BJ (cell line): ENCODE measurements at regions of chr13 and their contacts with region 1.

Region 1: GRCh38 chr13:79679334-79679733 is 198.4 kb downstream of the NDFIP2 start:
- DNase-seq: no peak
- H3K4me3 ChIP-seq: no peak overlapping the region
- H3K27me3 ChIP-seq: no peaks in the 10 kb centered on the region
- CTCF ChIP-seq: peak; percentile 79

Region 2: GRCh38 chr13:79445968-79446645 is 233.2 kb before region 1 on chr13:
- CTCF ChIA-PET with region 1: no interaction called
- POLR2A ChIA-PET with region 1: no interaction called
- DNase-seq: no peak
- H3K4me3 ChIP-seq: no peak overlapping the region
- H3K27me3 ChIP-seq: no peaks in the 10 kb centered on the region
- CTCF ChIP-seq: no peak

Region 3: GRCh38 chr13:79480954-79481684 is 198.2 kb before region 1 on chr13 and contains the start of gene NDFIP2:
- CTCF ChIA-PET with region 1: no interaction called
- POLR2A ChIA-PET with region 1: no interaction called
- DNase-seq: no peak
- H3K4me3 ChIP-seq: peak within 1 kb of the TSS; percentile 94
- H3K27me3 ChIP-seq: peaks cover 7% of the 10 kb centered on the region; the same call in 1 of the 2 replicates
- CTCF ChIP-seq: 0 out of 2 replicates have a peak, but pooled peaks have one; percentile 3
- polyA plus RNA-seq, gene NDFIP2: 53.8 and 71.5 TPM in 2 replicates

Region 4: DNA sequence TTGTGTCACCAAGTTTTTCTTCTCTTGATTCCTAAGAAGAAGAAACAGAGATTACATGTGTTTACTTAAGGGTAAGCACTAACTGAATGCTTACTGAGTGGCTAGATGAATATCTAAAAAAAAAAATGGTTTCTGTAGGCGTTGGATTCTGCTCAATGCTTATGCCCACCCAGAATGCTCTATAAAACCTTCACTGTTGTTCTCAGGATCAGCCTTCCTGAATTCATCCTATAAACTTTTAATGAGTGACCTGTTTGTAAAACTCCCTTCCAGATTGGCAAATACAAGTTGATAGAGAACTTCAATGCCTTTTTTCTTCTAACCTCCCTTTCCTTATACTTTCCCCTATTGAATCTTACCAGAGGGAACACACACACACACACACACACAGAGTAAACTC is 108.2 kb before region 1 on chr13:
- CTCF ChIA-PET with region 1: no interaction called
- POLR2A ChIA-PET with region 1: no interaction called
- DNase-seq: no peak
- H3K4me3 ChIP-seq: no peak overlapping the region
- H3K27me3 ChIP-seq: no peaks in the 10 kb centered on the region
- CTCF ChIP-seq: no peak

Region 5: DNA sequence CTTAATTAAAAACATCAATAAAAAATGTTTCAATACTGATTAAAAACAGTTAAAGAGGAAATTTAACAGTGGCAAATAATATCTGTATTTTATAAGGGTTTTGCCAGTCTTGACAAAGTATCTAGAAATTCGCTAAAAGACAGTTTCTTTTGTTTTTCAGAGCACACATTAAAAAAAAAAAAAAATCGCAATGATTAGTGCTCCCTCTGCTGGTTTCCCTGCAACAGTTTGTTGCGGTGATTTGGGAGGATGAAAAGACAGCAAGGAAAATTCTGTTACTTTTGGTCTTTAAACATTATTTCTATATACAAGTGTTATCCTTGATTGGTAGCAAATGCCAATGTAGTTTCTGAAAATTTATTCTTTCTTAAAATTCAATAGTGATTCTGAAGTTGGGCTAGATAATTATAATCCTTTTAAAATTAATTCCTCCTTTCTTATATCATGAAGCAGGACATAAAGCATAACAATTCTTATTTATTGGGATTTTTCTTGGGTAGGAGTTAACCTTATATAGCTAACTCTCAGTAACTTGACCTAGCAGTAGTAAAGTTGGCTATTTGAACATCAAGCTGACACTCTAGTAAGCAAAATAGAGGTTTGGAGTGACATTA is 684.7 kb after region 1 on chr13:
- CTCF ChIA-PET with region 1: interaction called, 20 read pairs
- POLR2A ChIA-PET with region 1: no interaction called
- DNase-seq: no peak
- H3K4me3 ChIP-seq: no peak overlapping the region
- H3K27me3 ChIP-seq: no peaks in the 10 kb centered on the region
- CTCF ChIP-seq: peak; percentile 76